ENCODE measurements at regions of chr2 and their contacts with region 1.

Region 1: GRCh38 chr2:45045695-45046094 is 36.4 kb upstream of the SIX2 start:
- DNase-seq: no peak
- H3K4me3 ChIP-seq: no peak overlapping the region
- H3K27ac ChIP-seq: no peak overlapping the region
- H3K4me1 ChIP-seq: no peaks in the 10 kb centered on the region
- H3K27me3 ChIP-seq: no peaks in the 10 kb centered on the region
- CTCF ChIP-seq: no peak

Region 2: DNA sequence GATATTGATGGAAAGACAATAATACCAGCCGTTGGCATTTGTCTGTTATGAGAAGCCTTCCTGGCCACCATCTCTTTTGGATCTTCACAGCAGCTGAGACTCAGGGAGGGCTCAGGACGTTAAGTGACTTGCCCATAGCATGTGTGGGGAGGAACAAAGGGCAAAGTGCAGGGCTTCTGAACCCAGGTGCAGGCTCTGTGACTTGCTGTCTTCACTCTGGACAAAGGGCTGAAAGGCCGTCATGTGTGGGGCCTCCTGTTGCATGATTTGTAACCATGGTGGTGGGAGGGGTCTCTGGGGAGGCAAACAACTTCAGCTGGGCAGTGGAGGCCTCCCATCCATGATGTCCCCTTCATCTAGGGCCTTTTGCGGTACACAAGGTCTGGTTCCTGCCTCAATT is 29.0 kb after region 1 on chr2:
- CTCF ChIA-PET with region 1: interaction called, 16 read pairs
- POLR2A ChIA-PET with region 1: no interaction called
- intact Hi-C with region 1: no loop called
- DNase-seq: no peak
- H3K4me3 ChIP-seq: no peak overlapping the region
- H3K27ac ChIP-seq: no peak overlapping the region
- H3K4me1 ChIP-seq: no peaks in the 10 kb centered on the region
- H3K27me3 ChIP-seq: no peaks in the 10 kb centered on the region
- CTCF ChIP-seq: no peak